ENCODE measurements at regions of chr6 and their contacts with region 1.

Region 1: GRCh38 chr6:30556066-30556905 is at the start of gene GNL1:
- DNase-seq: peak; percentile 99 to 100 (median 99)
- H3K4me3 ChIP-seq: peak within 1 kb of the TSS; percentile 97
- H3K4me3 Mint-ChIP-seq: peak within 1 kb of the TSS; percentile 94 to 100 (median 99)
- H3K27ac ChIP-seq: peak within 1 kb of the TSS; percentile 98
- H3K27ac Mint-ChIP-seq: peak within 1 kb of the TSS; percentile 98 to 100 (median 100)
- H3K4me1 ChIP-seq: peaks cover 13% of the 10 kb centered on the region
- H3K4me1 Mint-ChIP-seq: peaks cover 39 to 63% (median 58%) of the 10 kb centered on the region in 3 donors
- H3K27me3 ChIP-seq: no peaks in the 10 kb centered on the region
- H3K27me3 Mint-ChIP-seq: peaks cover 0 to 4% of the 10 kb centered on the region in 2 donors
- total RNA-seq, gene GNL1: 100 to 102 TPM

Region 2: DNA sequence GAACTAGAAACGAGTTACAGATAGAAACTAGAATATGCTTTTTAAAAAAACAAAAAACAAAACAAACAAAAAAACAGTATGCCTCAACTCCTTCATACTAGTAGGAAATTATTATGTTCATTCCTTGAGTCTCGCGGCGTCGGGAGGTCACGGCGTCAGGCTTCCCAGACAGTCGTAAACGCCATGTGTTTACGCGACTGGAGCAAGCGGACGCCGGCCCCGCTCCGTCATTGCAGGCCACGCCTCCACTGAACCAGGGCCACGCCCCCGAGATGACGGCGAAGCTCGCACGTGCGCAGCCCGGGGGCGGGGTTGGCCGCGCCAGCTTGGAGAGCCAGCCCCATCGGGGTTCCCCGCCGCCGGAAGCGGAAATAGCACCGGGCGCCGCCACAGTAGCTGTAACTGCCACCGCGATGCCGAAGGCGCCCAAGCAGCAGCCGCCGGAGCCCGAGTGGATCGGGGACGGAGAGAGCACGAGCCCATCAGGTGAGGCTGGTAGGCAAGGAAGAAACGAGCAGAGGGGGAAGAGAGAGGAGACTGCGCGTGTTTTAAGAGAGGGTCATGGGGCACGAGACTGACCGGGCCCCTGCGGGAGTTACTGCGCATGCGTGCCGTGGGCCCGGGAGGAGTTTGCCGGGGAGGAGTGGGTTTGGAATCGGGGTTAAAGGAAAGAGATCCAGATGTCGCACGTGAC is 14.9 kb after region 1 on chr6 and contains the start of gene ABCF1:
- CTCF ChIA-PET with region 1: interaction called, 9 read pairs
- POLR2A ChIA-PET with region 1: interaction called, 32 read pairs
- DNase-seq: peak; percentile 99 to 100 (median 99)
- H3K4me3 ChIP-seq: peak within 1 kb of the TSS; percentile 92
- H3K4me3 Mint-ChIP-seq: peak within 1 kb of the TSS; percentile 92 to 100 (median 98)
- H3K27ac ChIP-seq: peak within 1 kb of the TSS; percentile 94
- H3K27ac Mint-ChIP-seq: peak within 1 kb of the TSS; percentile 96 to 100 (median 100)
- H3K4me1 ChIP-seq: peaks cover 53% of the 10 kb centered on the region
- H3K4me1 Mint-ChIP-seq: peaks cover 63 to 73% (median 69%) of the 10 kb centered on the region in 3 donors
- H3K27me3 ChIP-seq: no peaks in the 10 kb centered on the region
- H3K27me3 Mint-ChIP-seq: no peaks in the 10 kb centered on the region
- total RNA-seq, gene ABCF1: 127 to 133 TPM

Measured in CD8-positive, alpha-beta memory T cell (primary cell).